Activated CD4-positive, alpha-beta memory T cell treated with anti-CD3 and anti-CD28 coated beads, Interleukin-2, amount 10 ng/mL, durations not matched to agents 7 days and 5 days (primary cell): ENCODE measurements at regions of chr13 and their contacts with region 1.

Region 1: DNA sequence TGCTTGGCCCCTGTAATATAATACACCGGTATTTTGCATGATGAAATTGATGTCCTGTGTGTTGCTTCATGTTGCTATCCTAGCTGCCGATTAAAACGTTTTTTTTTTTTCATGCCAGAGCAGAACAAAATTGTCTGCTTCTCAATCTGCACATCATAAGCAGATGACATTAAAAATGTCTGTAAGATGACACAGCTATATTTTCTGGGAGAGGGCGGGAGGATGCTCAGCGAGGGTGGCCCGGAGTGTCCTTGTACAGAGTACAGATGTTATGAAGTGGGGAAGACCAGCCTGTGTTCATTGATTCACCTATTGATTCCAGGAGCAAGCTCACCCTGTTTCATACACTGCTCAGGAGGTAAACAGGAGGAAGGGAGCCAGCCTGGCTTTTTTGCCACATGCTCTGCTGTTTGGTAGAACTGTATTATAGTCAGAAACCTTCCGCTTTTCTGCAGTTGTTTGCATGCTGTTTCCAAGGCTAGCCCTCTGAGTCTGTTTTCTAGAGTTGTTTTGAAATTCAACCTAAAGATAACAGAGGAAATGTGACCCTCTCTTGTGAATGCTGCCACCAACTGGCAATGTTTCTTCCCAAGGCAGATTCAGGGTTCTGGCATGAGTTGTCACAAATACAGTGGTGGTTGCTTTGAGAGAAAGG is 4.7 kb upstream of the IRS2 start:
- DNase-seq: peak; percentile 40
- H3K4me3 Mint-ChIP-seq: no peak overlapping the region
- H3K27ac Mint-ChIP-seq: peak overlapping the region; percentile 55
- H3K4me1 Mint-ChIP-seq: peaks cover 65% of the 10 kb centered on the region
- H3K27me3 Mint-ChIP-seq: peaks cover 30% of the 10 kb centered on the region

Region 2: GRCh38 chr13:109779074-109779473 is 12.0 kb before region 1 on chr13:
- CTCF ChIA-PET with region 1: interaction called, 8 read pairs
- POLR2A ChIA-PET with region 1: interaction called, 16 read pairs
- DNase-seq: peak; percentile 60
- H3K4me3 Mint-ChIP-seq: peak overlapping the region; percentile 58
- H3K27ac Mint-ChIP-seq: peak overlapping the region; percentile 65
- H3K4me1 Mint-ChIP-seq: peaks cover 50% of the 10 kb centered on the region
- H3K27me3 Mint-ChIP-seq: no peaks in the 10 kb centered on the region

Region 3: DNA sequence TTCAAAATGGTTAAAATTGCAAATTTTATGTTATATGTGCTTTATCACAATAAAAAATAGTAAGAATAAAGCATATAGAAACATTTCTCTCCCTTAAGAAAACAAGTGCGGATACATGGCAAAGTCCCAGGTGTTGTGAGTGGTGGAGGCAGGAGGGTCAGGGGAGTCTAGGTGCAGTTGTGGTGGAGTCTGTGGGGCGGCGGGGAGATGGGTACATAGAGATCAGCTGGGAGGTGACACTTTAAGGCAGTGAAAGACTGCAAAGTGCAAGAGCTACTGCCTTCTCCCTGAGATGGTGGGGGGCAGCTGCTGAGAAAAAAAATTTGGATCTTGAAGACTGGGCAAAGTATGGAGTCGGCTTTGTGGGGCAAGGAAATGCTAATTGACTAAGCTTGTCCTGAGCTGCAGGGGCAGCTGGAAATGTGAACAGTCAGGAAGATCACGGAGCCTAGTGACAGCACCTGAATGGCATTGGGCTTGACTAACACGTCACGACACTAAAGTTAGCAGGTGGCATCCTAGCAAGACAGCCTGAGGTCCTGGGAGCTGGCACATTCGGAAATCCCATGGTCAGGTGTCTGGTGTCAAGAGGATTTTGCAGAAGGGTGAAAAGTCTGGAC is 68.2 kb after region 1 on chr13:
- CTCF ChIA-PET with region 1: no interaction called
- POLR2A ChIA-PET with region 1: no interaction called
- DNase-seq: no peak
- H3K4me3 Mint-ChIP-seq: no peak overlapping the region
- H3K27ac Mint-ChIP-seq: no peak overlapping the region
- H3K4me1 Mint-ChIP-seq: no peaks in the 10 kb centered on the region
- H3K27me3 Mint-ChIP-seq: peaks cover 40% of the 10 kb centered on the region